ENCODE measurements at regions of chr4 and their contacts with region 1.

Region 1: GRCh38 chr4:73593631-73594241 is 26.5 kb downstream of the RASSF6 start:
- DNase-seq: no peak
- H3K4me3 ChIP-seq: no peak overlapping the region
- H3K27ac ChIP-seq: no peak overlapping the region
- H3K27me3 ChIP-seq: no peaks in the 10 kb centered on the region
- CTCF ChIP-seq: peak; percentile 63

Region 2: GRCh38 chr4:73573794-73574406 is 19.8 kb before region 1 on chr4:
- CTCF ChIA-PET with region 1: interaction called, 42 read pairs
- POLR2A ChIA-PET with region 1: no interaction called
- DNase-seq: peak; percentile 75
- H3K4me3 ChIP-seq: no peak overlapping the region
- H3K27ac ChIP-seq: no peak overlapping the region
- H3K27me3 ChIP-seq: peaks cover 3% of the 10 kb centered on the region
- CTCF ChIP-seq: peak; percentile 99

Region 3: DNA sequence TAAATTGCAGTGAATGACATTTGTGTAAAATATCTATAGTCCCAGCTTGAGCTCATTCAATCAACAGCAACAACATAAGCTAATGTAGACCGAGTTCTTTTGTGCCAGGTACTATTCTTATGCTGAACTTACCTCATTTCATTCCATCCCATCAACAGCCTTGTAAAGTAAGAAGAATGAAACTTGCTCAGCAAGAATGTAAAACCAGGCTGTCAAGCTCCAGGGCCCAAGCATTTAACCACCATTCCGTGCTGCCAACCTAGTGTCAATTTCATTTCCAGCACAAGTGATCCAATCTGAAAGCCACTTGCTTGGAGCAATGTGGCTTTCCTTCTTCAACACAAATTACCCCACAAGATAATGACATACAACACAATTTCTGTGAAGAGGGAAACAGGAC is 10.1 kb before region 1 on chr4:
- CTCF ChIA-PET with region 1: interaction called, 10 read pairs
- POLR2A ChIA-PET with region 1: no interaction called
- DNase-seq: no peak
- H3K4me3 ChIP-seq: no peak overlapping the region
- H3K27ac ChIP-seq: no peak overlapping the region
- H3K27me3 ChIP-seq: no peaks in the 10 kb centered on the region
- CTCF ChIP-seq: no peak

Region 4: DNA sequence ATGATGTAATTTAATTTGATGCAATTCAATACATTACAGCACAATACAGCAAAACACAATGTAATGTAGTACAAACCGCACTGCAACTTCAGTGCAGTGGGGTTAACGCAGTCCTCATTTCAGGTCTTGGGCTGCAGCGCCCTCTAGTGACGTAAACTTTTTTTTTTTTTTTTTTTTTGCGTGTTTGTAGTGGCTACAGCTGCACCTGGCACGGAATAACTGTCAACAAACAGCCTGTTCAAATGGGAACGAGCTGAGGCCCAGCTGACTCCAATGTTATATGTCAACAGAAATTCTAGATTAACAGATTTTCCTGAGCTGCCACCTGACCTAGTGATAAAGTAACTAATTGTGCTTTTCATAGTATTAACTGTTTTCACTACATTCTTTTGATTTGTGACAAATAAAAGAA is 60.0 kb after region 1 on chr4:
- CTCF ChIA-PET with region 1: interaction called, 80 read pairs
- POLR2A ChIA-PET with region 1: no interaction called
- DNase-seq: peak; percentile 24
- H3K4me3 ChIP-seq: no peak overlapping the region
- H3K27ac ChIP-seq: no peak overlapping the region
- H3K27me3 ChIP-seq: no peaks in the 10 kb centered on the region
- CTCF ChIP-seq: peak; percentile 65

Region 5: DNA sequence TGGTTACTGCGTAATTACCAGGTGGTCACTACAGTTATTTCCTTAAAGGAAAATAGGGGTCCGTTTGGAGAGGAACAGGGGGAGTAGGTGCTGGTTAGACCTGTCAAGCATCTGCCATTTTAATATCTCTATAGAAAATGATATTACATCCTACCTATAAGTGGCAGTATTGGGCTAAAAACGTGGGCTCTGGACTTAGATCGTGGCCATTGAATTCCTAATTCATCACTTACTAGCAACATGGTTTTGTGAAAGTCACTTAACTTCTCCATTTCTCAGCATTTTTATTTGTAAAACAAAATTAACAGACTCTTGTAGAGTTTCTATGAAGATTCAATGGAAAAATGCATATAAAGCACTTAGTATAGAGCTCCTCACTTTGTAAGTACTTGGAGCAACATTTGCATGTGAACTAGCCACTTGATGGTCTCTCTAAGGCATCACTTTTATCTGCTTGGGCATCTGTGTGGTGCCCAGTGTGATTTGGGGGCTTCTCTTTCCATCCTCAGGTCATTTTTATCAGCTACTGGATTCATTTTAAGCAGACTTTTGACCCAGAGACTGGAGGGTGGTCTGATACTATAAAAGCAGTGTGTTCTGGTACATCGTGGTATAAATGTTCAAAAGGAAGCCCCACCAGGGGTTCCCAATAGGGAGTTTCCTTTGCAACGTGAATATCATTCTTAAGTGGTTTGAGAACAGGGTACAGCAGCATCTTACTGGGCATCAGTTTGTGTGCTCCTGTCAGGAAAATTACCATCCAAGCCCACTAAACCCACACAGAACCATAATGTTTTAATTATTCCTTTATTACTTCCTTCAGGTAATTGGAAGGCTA is 69.2 kb after region 1 on chr4:
- CTCF ChIA-PET with region 1: interaction called, 15 read pairs
- POLR2A ChIA-PET with region 1: no interaction called
- DNase-seq: no peak
- H3K4me3 ChIP-seq: no peak overlapping the region
- H3K27ac ChIP-seq: no peak overlapping the region
- H3K27me3 ChIP-seq: no peaks in the 10 kb centered on the region
- CTCF ChIP-seq: peak; percentile 60